Naive thymus-derived CD4-positive, alpha-beta T cell (primary cell): ENCODE measurements at regions of chr2 and their contacts with region 1.

Region 1: DNA sequence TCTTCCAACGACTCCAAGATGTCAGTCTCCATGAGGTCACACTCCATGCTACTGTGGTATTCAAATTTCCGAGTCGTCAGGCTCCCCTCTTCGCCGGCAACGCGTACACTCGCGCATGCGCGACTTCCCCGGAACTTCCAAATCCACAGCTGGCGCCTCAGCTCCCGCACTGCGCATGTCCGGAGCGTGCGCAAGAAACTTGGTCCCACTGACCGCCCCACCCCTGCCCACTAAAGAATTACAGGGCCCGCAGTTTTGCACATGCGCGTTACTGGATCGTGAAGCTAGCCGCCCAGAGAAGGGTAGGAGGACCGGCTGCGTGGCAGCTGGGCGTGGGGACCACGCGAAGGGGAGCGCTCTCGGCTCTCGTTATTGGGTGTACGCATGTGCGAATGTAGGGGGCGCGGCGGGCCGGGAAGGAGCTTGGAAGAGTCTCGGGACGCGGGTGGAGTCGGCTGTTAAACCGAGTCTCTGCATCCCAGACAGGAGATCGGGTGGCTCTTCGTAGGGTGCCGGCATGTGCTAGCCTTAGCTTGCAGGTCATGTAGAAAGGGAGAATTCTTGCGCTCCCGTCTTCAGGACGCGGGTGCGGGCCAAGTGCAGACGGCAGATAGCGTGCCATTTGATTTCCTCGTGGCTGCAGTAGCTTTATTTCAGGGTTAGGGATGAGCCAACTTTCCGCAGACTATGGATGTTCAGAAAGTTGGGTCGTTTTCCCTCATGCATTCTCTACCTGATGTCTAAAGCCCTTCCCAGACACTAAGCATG is at the start of gene FAM98A:
- DNase-seq: peak; percentile 96 to 98 (median 98)
- ATAC-seq: peak; percentile 96
- H3K4me3 ChIP-seq: peak within 1 kb of the TSS; percentile 92
- H3K4me3 Mint-ChIP-seq: peak within 1 kb of the TSS; percentile 91 to 99 (median 96)
- H3K27ac ChIP-seq: peak within 1 kb of the TSS; percentile 89
- H3K27ac Mint-ChIP-seq: peak within 1 kb of the TSS; percentile 86 to 97 (median 96)
- H3K4me1 ChIP-seq: peaks cover 10 to 14% of the 10 kb centered on the region in 2 donors
- H3K4me1 Mint-ChIP-seq: peaks cover 17 to 45% (median 33%) of the 10 kb centered on the region in 7 donors
- H3K27me3 ChIP-seq: no peaks in the 10 kb centered on the region
- H3K27me3 Mint-ChIP-seq: peaks cover 0 to 4% (median 0%) of the 10 kb centered on the region in 5 donors
- total RNA-seq, gene FAM98A: 16.8 to 36.0 (median 32.6) TPM

Region 2: GRCh38 chr2:32063310-32064161 is 1535.8 kb before region 1 on chr2 and contains the start of gene SPAST:
- CTCF ChIA-PET with region 1: no interaction called
- POLR2A ChIA-PET with region 1: no interaction called
- intact Hi-C with region 1: loop called (anchors 1 kb)
- DNase-seq: peak; percentile 92 to 97 (median 95)
- ATAC-seq: peak; percentile 93
- H3K4me3 ChIP-seq: peak within 1 kb of the TSS; percentile 99
- H3K4me3 Mint-ChIP-seq: peak within 1 kb of the TSS; percentile 91 to 100 (median 98)
- H3K27ac ChIP-seq: peak within 1 kb of the TSS; percentile 88
- H3K27ac Mint-ChIP-seq: peak within 1 kb of the TSS; percentile 88 to 97 (median 92)
- H3K4me1 ChIP-seq: peaks cover 5 to 15% of the 10 kb centered on the region in 2 donors
- H3K4me1 Mint-ChIP-seq: peaks cover 22 to 46% (median 37%) of the 10 kb centered on the region in 7 donors
- H3K27me3 ChIP-seq: no peaks in the 10 kb centered on the region
- H3K27me3 Mint-ChIP-seq: peaks cover 0 to 1% (median 0%) of the 10 kb centered on the region in 5 donors
- total RNA-seq, gene SPAST: 16.3 to 21.0 (median 20.3) TPM

Region 3: DNA sequence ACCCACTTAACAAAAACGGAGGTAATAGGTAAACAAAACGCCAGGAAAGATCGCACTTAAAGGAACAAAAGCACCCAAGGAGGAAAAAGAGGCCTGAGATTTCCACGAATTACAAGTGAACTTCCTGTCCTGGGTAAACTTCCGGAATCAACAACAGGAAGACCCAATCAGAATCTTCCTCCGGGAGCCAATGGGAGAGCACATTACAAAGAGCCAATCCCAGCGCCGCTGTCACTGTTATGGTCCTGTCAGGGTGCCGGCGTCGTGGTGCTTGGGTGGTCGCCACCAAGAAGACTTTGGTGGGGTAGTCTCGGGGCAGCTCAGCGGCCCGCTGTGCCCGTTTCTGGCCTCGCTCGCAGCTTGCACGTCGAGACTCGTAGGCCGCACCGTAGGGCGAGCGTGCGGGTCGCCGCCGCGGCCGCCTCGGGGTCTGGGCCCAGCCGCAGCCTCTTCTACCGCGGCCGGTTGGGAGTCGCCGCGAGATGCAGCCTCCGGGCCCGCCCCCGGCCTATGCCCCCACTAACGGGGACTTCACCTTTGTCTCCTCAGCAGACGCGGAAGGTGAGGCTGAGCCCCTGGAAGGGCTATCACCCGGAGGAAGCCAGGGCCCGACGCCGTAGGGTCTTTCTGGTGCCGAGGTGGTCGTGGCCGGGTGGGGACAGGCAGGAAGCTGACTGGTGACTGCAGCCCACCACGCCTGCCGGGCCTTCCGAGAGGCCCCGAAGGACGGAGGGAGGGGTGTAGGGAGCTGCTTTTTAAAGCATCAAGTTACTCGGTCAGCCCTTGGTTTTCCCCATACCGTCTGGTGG is 1321.5 kb before region 1 on chr2 and contains the start of gene YIPF4:
- CTCF ChIA-PET with region 1: no interaction called
- POLR2A ChIA-PET with region 1: no interaction called
- intact Hi-C with region 1: loop called in 1 of 2 experiments (anchors 5 kb)
- DNase-seq: peak; percentile 84 to 92 (median 88)
- ATAC-seq: peak; percentile 99
- H3K4me3 ChIP-seq: peak within 1 kb of the TSS; percentile 67
- H3K4me3 Mint-ChIP-seq: peak within 1 kb of the TSS; percentile 82 to 100 (median 94)
- H3K27ac ChIP-seq: peak within 1 kb of the TSS; percentile 84
- H3K27ac Mint-ChIP-seq: peak within 1 kb of the TSS; percentile 91 to 100 (median 98)
- H3K4me1 ChIP-seq: peaks cover under 1 to 6% of the 10 kb centered on the region in 2 donors
- H3K4me1 Mint-ChIP-seq: peaks cover 10 to 46% (median 33%) of the 10 kb centered on the region in 7 donors
- H3K27me3 ChIP-seq: no peaks in the 10 kb centered on the region
- H3K27me3 Mint-ChIP-seq: peaks cover 0 to 6% (median 0%) of the 10 kb centered on the region in 5 donors
- total RNA-seq, gene YIPF4: 21.0 to 43.5 (median 30.5) TPM

Region 4: GRCh38 chr2:32752205-32752604 is 847.2 kb before region 1 on chr2:
- CTCF ChIA-PET with region 1: no interaction called
- POLR2A ChIA-PET with region 1: no interaction called
- intact Hi-C with region 1: loop called in 1 of 2 experiments (anchors 10 kb)
- DNase-seq: no peak
- ATAC-seq: no peak
- H3K4me3 ChIP-seq: no peak overlapping the region
- H3K4me3 Mint-ChIP-seq: no peak overlapping the region
- H3K27ac ChIP-seq: no peak overlapping the region
- H3K27ac Mint-ChIP-seq: peak overlapping the region in 1 of 9 donors; percentile 55
- H3K4me1 ChIP-seq: no peaks in the 10 kb centered on the region
- H3K4me1 Mint-ChIP-seq: peaks cover 6 to 25% (median 16%) of the 10 kb centered on the region in 7 donors
- H3K27me3 ChIP-seq: no peaks in the 10 kb centered on the region
- H3K27me3 Mint-ChIP-seq: no peaks in the 10 kb centered on the region

Region 5: GRCh38 chr2:33123216-33123615 is 476.1 kb before region 1 on chr2:
- CTCF ChIA-PET with region 1: no interaction called
- POLR2A ChIA-PET with region 1: no interaction called
- intact Hi-C with region 1: no loop called
- DNase-seq: no peak
- ATAC-seq: no peak
- H3K4me3 ChIP-seq: no peak overlapping the region
- H3K4me3 Mint-ChIP-seq: no peak overlapping the region
- H3K27ac ChIP-seq: no peak overlapping the region
- H3K27ac Mint-ChIP-seq: no peak overlapping the region
- H3K4me1 ChIP-seq: no peaks in the 10 kb centered on the region
- H3K4me1 Mint-ChIP-seq: no peaks in the 10 kb centered on the region
- H3K27me3 ChIP-seq: no peaks in the 10 kb centered on the region
- H3K27me3 Mint-ChIP-seq: peaks cover 10 to 21% (median 17%) of the 10 kb centered on the region in 5 donors

Region 6: GRCh38 chr2:33475224-33476130 is 123.9 kb before region 1 on chr2:
- CTCF ChIA-PET with region 1: interaction called, 8 read pairs
- POLR2A ChIA-PET with region 1: interaction called, 14 read pairs
- intact Hi-C with region 1: loop called (anchors 1 kb)
- DNase-seq: peak; percentile 61 to 89 (median 83)
- ATAC-seq: peak; percentile 86
- H3K4me3 ChIP-seq: peak overlapping the region; percentile 81
- H3K4me3 Mint-ChIP-seq: peak overlapping the region; percentile 88 to 99 (median 95)
- H3K27ac ChIP-seq: peak overlapping the region; percentile 91
- H3K27ac Mint-ChIP-seq: peak overlapping the region; percentile 95 to 100 (median 98)
- H3K4me1 ChIP-seq: peaks cover 9 to 11% of the 10 kb centered on the region in 2 donors
- H3K4me1 Mint-ChIP-seq: peaks cover 14 to 39% (median 32%) of the 10 kb centered on the region in 7 donors
- H3K27me3 ChIP-seq: no peaks in the 10 kb centered on the region
- H3K27me3 Mint-ChIP-seq: peaks cover 0 to 4% (median 0%) of the 10 kb centered on the region in 5 donors